Dendritic cell treated with granulocyte-macrophage colony-stimulating factor and Interleukin-4, amounts not matched to agents 40 ng/mL and 50 ng/mL, for 4 days (primary cell): ENCODE measurements at regions of chr14 and their contacts with region 1.

Region 1: GRCh38 chr14:67837011-67837624 is 17.5 kb downstream of the RAD51B start:
- H3K4me3 Mint-ChIP-seq: no peak overlapping the region
- H3K27ac Mint-ChIP-seq: no peak overlapping the region
- H3K4me1 Mint-ChIP-seq: no peaks in the 10 kb centered on the region
- H3K27me3 Mint-ChIP-seq: no peaks in the 10 kb centered on the region

Region 2: GRCh38 chr14:67610491-67610890 is 226.6 kb before region 1 on chr14:
- intact Hi-C with region 1: no loop called
- H3K4me3 Mint-ChIP-seq: no peak overlapping the region
- H3K27ac Mint-ChIP-seq: no peak overlapping the region
- H3K4me1 Mint-ChIP-seq: peaks cover 12% of the 10 kb centered on the region
- H3K27me3 Mint-ChIP-seq: peaks cover 4% of the 10 kb centered on the region

Region 3: DNA sequence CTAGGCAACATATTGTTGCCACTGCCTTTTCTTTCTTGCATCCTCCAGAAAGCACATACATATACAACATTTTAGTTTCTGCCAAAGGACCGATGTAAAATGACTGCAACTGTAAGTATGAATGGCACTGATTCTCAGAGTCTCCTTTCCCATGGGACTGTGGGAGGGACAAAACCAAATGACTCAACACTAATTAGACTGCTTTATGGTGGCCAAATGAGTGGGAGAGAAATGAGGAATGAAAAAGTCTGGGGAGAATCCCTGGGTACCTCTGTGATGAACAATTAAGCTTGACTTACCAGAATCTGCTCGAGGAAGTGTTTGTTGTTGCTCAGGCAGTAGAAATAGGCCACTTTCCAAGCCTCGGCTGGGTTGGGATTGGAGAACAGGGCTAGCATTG is 30.9 kb before region 1 on chr14:
- intact Hi-C with region 1: no loop called
- H3K4me3 Mint-ChIP-seq: no peak overlapping the region
- H3K27ac Mint-ChIP-seq: no peak overlapping the region
- H3K4me1 Mint-ChIP-seq: no peaks in the 10 kb centered on the region
- H3K27me3 Mint-ChIP-seq: no peaks in the 10 kb centered on the region

Region 4: DNA sequence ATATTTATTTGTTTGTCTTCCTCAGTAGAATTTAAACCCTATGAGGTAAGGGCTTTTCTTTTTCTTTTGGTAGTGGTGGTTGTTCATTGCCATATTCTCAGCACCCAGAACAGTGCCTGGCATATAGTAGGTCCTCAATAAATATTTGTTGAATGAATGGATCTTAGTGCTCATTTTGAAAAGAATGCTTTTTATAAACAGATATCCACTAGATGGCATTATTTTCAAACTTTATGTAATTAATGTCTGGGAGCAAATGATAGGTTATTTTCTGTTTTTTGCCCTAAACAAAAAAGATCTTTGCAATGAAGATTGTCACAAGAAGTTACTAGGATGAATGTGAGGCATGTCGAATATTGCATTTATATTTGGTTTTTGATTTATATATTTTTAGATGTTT is 46.6 kb after region 1 on chr14:
- intact Hi-C with region 1: loop called (anchors 5 kb)
- H3K4me3 Mint-ChIP-seq: no peak overlapping the region
- H3K27ac Mint-ChIP-seq: peak overlapping the region; percentile 85
- H3K4me1 Mint-ChIP-seq: peaks cover 38% of the 10 kb centered on the region
- H3K27me3 Mint-ChIP-seq: no peaks in the 10 kb centered on the region

Region 5: DNA sequence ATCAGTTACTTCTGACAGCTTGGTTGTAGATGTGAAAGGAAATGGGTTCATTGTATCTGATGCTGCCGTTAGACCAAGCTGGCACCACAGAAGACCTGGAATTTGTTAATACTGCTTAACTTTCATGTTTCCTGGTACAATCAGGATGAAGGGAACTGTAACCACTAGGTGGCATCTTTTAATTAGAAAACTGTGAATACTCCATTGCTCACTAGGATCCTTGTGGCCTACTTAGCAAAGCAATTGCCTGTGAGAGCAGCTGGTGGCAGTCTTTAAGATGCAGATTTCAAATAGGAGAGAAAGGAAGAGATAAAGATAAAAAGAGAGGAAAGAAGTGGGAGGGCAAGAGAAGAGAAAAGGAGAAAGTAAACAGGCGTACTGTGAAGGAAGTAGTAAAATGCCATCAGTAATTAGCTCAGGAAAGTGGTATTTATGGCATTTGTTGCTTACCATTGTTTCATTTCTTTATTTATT is 96.9 kb after region 1 on chr14:
- intact Hi-C with region 1: loop called (anchors 5 kb)
- H3K4me3 Mint-ChIP-seq: no peak overlapping the region
- H3K27ac Mint-ChIP-seq: no peak overlapping the region
- H3K4me1 Mint-ChIP-seq: peaks cover 6% of the 10 kb centered on the region
- H3K27me3 Mint-ChIP-seq: no peaks in the 10 kb centered on the region

Region 6: DNA sequence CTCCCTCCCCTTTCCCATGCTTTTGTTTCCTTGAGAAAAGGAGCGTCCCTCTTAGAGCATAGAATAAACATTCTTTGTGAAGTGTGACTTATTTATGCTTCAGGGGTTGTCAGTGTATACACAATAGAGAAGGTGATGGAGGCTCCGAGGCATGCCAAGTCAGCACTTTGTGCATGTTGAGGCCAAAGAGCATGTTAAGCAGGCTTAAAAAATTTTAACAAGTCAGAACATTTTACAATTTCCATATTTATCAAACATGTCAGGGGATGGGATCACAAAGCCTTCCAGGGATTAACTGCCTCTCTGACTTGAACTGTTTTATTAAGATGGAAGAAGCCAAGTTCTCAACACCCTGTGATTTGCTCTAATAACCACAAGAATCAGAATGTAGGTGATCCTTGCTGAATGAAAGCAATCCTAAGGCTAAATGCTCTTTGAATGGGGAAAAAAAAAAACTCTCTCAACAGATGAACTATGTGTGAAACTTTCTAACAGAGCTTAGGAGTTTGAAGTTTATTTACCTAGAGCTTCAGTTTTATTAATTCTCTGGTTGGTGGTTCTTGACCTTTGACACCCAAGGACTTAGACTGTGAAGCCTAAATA is 205.6 kb after region 1 on chr14:
- intact Hi-C with region 1: no loop called
- H3K4me3 Mint-ChIP-seq: no peak overlapping the region
- H3K27ac Mint-ChIP-seq: no peak overlapping the region
- H3K4me1 Mint-ChIP-seq: no peaks in the 10 kb centered on the region
- H3K27me3 Mint-ChIP-seq: no peaks in the 10 kb centered on the region

Region 7: GRCh38 chr14:68816262-68816942 is 979.3 kb after region 1 on chr14:
- intact Hi-C with region 1: loop called (anchors 5 kb)
- H3K4me3 Mint-ChIP-seq: peak overlapping the region; percentile 71
- H3K27ac Mint-ChIP-seq: peak overlapping the region; percentile 95
- H3K4me1 Mint-ChIP-seq: peaks cover 49% of the 10 kb centered on the region
- H3K27me3 Mint-ChIP-seq: no peaks in the 10 kb centered on the region